HEK293T (cell line): ENCODE measurements at regions of chr14 and their contacts with region 1.

Region 1: GRCh38 chr14:49585803-49586672 is at the start of gene RPS29:
- DNase-seq: peak; percentile 94

Region 2: GRCh38 chr14:49512147-49512551 is 73.9 kb before region 1 on chr14:
- CTCF ChIA-PET with region 1: no interaction called
- POLR2A ChIA-PET with region 1: no interaction called
- DNase-seq: no peak

Region 3: GRCh38 chr14:49566714-49567113 is 19.3 kb before region 1 on chr14:
- CTCF ChIA-PET with region 1: interaction called, 3 read pairs
- POLR2A ChIA-PET with region 1: interaction called, 10 read pairs
- DNase-seq: no peak

Region 4: DNA sequence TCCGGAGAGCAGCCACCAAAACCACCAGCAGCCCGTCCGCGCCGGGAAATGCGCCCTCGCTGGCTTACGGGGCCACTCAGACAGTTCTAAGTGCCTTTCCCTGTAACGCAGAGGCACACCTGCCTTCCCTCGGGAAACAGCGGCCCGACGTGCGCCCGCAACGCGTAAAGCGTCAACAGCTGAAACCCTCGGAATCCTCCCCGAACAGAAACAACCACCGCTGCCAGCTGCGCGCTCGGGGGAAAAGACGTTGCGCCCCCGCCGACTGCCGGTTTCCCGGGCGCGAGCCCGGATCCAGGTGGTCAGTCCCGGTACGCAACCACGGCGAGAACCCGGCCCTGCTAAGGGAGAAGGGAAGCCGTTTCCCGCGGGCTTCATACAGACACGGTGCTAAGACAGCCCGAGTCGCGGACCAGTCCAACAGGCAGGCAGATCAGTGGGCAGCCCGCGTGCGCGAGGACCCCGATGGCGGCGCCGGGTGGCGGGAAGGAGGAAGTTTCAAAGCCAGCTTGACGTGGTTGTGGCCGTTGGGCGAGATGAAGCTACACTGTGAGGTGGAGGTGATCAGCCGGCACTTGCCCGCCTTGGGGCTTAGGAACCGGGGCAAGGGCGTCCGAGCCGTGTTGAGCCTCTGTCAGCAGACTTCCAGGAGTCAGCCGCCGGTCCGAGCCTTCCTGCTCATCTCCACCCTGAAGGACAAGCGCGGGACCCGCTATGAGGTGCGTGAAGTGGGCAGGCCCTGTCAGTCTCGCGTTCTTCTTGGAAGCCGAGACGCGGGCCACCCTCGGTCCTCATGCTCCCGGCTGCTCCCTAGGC is 12.7 kb after region 1 on chr14 and contains the start of gene LRR1:
- CTCF ChIA-PET with region 1: interaction called, 16 read pairs
- POLR2A ChIA-PET with region 1: interaction called, 40 read pairs
- DNase-seq: peak; percentile 66

Region 5: GRCh38 chr14:49641697-49642129 is 55.7 kb after region 1 on chr14:
- CTCF ChIA-PET with region 1: no interaction called
- POLR2A ChIA-PET with region 1: no interaction called
- DNase-seq: peak; percentile 10